ENCODE measurements at regions of chr9 and their contacts with region 1.

Region 1: GRCh38 chr9:27791311-27791710 is 218.0 kb upstream of the C9orf72 start:
- DNase-seq: no peak
- ATAC-seq: peak; percentile 52; the same call in 2 of the 3 replicates
- H3K4me3 ChIP-seq: no peak overlapping the region
- H3K27ac ChIP-seq: no peak overlapping the region
- H3K4me1 ChIP-seq: no peaks in the 10 kb centered on the region
- H3K27me3 ChIP-seq: no peaks in the 10 kb centered on the region
- CTCF ChIP-seq: no peak
- EP300 ChIP-seq: no peak
- POLR2A ChIP-seq: no peak
- RAD21 ChIP-seq: no peak

Region 2: GRCh38 chr9:27073841-27074728 is 717.2 kb before region 1 on chr9:
- CTCF ChIA-PET with region 1: no interaction called
- POLR2A ChIA-PET with region 1: no interaction called
- RAD21 ChIA-PET with region 1: no interaction called
- SMC1A ChIA-PET with region 1: no interaction called
- in situ Hi-C with region 1: no loop called
- intact Hi-C with region 1: no loop called
- DNase-seq: no peak
- ATAC-seq: no peak
- H3K4me3 ChIP-seq: no peak overlapping the region
- H3K27ac ChIP-seq: no peak overlapping the region
- H3K4me1 ChIP-seq: no peaks in the 10 kb centered on the region
- H3K27me3 ChIP-seq: no peaks in the 10 kb centered on the region
- CTCF ChIP-seq: no peak
- EP300 ChIP-seq: no peak
- POLR2A ChIP-seq: no peak
- RAD21 ChIP-seq: no peak

Region 3: DNA sequence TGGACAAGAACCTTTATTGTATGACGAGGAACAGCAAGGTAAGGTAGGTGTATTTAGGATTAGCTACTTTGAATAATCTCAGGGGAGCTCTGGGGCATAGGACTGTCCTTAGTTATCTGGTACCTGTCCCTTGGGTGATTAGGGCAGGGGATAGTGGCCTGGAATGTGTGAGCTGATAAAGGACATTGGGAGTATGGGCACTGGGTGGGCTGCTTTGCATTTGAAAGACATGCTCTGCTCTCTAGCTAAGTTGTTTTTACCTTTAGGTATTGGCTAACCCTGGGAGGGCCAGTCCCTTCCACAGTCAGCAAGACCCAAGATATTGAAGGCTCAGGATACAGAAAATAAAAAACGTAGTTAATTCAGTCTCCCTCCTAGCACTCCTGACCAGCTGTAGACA is 64.7 kb after region 1 on chr9:
- CTCF ChIA-PET with region 1: no interaction called
- POLR2A ChIA-PET with region 1: no interaction called
- RAD21 ChIA-PET with region 1: no interaction called
- SMC1A ChIA-PET with region 1: no interaction called
- in situ Hi-C with region 1: no loop called
- intact Hi-C with region 1: loop called (anchors 10 kb)
- DNase-seq: no peak
- ATAC-seq: no peak
- H3K4me3 ChIP-seq: no peak overlapping the region
- H3K27ac ChIP-seq: no peak overlapping the region
- H3K4me1 ChIP-seq: no peaks in the 10 kb centered on the region
- H3K27me3 ChIP-seq: no peaks in the 10 kb centered on the region
- CTCF ChIP-seq: no peak
- EP300 ChIP-seq: no peak
- POLR2A ChIP-seq: no peak
- RAD21 ChIP-seq: no peak

Region 4: GRCh38 chr9:27880156-27880555 is 88.8 kb after region 1 on chr9:
- CTCF ChIA-PET with region 1: no interaction called
- POLR2A ChIA-PET with region 1: no interaction called
- RAD21 ChIA-PET with region 1: no interaction called
- SMC1A ChIA-PET with region 1: no interaction called
- in situ Hi-C with region 1: no loop called
- intact Hi-C with region 1: no loop called
- DNase-seq: no peak
- ATAC-seq: no peak
- H3K4me3 ChIP-seq: no peak overlapping the region
- H3K27ac ChIP-seq: no peak overlapping the region
- H3K4me1 ChIP-seq: no peaks in the 10 kb centered on the region
- H3K27me3 ChIP-seq: no peaks in the 10 kb centered on the region; a peak in 2 of 4 replicates
- CTCF ChIP-seq: no peak
- EP300 ChIP-seq: no peak
- POLR2A ChIP-seq: no peak
- RAD21 ChIP-seq: no peak